Cardiac septum (tissue), 1 donor: ENCODE measurements at regions of chr3 and their contacts with region 1.

Region 1: DNA sequence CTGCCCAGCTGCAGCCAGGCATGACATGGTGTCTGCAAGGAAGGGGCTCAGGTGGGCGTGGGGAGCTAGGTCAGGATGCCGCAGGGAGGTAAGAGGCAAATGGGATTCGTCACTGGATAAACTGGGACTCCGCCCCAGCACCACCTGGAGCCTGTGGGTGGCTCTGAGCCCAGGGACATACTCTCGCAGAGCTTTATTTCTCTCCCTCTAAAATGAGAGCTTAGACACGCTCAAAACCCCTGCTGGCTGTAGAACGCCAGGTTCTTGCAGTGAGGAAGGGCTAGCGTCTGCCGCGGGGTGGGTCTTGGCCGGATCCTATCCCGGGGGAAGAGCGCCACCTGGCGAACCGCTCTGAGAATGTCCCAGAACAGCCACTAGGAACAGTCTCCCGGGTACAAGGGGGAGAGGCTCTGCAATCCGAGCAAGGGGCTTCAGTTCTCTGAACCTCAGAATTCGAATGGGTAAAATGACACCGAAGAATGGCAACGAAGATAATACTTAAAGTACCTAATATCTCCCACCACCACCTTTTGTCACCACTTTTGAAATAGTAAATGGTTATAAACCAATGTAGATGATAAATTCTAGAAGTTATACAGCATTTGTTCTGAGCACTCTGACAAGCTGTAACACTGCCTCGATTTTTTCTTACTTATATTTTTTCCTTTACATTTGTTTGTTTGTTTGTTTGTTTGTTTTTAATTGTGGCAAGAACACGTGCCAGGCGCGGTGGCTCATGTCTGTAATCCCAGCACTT is 53.2 kb upstream of the SRGAP3 start:
- DNase-seq: peak; percentile 81

Region 2: DNA sequence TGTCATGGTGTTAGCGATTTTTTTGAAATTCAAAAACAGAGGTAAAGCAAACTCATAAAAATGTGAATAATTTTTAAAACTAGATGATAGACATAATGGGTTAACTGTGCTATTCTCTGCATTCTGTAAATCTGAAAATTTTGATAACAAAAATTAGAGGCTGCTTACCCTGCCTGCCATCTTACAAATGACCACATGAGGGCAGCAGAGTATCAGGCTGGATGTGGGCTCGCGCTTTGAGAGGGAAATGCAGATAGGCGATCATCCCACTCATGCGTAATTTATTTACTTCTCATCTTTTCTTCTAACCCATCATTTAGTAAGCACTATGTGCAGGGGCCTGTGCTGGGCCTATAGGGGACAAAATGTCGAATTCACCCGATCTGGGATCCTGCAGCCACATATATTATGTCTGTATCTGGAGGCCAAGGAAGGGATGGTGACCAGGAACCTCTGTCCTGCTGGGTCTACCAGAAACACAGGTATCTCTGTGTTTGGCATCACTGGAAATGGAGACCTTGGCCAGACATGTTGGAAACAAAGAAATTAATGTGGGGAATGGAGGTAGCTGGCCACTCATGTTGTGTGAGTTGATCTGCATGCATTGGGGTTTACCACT is 331.5 kb before region 1 on chr3:
- intact Hi-C with region 1: loop called (anchors 1 kb)
- DNase-seq: no peak

Region 3: GRCh38 chr3:8987645-8988383 is 314.8 kb before region 1 on chr3:
- intact Hi-C with region 1: loop called (anchors 5 kb)
- DNase-seq: no peak

Region 4: DNA sequence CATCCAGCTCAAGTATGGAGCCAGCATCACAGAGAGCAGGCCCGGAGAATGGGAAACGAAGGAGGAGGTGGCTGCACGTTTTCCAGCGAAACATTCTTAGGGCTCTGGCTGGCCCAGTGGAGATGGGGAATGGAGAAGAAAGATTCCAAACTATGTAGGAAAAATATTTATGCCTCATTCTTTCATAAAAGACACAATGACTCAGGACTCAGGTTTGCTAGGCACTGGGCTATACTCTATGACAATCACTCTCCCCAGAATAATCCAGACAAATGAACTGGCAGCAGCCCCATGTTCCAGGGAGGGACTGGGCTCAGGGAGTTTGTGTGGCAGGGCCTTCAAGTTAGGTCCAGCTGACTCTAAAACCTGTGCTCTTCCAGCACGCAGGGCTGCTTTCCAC is 228.5 kb before region 1 on chr3:
- intact Hi-C with region 1: loop called (anchors 5 kb)
- DNase-seq: peak; percentile 73

Region 5: DNA sequence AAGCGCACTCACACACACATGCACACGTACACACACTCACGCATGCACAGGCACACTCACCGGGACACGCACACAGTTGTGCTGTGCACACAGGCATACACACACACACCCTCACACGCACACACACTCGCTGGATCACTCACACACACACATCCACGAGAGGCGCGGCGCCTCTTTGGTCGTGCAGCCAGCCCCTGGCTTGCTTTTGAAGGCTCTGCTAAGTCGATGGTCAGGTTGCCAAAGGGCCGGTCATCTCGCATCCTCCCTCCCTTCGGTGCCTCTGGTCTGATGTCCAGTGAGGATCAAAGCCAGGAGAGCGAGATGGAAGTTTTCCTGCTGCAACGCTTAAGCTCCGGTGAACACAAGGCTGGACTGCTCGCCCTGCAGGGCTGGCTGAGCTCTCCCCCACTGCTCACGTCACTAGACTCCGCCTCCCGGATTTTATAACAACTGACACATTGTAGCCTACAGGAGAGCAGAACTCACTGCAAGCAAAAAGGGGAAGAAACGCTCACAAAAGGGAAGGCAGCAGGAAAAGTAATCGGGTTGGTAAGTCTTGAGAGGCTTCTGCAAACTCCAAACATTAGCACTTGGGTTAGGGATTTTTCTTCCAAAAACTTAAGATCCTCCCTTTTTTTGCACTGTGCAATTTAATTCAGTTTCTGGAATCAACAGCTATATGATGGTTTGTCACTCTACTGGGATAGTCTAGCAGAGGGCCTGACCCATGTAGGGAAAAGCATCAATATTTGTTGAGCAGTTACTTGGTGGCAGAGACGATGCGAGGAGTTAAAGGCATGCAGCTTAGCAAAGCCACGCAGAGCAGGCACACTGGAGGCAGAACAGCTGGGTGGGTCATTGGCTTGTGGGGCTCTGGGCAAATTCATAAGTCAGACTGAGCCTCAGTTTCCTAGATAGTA is 53.1 kb before region 1 on chr3 and contains the start of gene SRGAP3:
- intact Hi-C with region 1: loop called (anchors 5 kb)
- DNase-seq: peak; percentile 88
- total RNA-seq, gene SRGAP3: 10.1 TPM